Breast epithelium (tissue), 4 donors: ENCODE measurements at regions of chr12 and their contacts with region 1.

Region 1: DNA sequence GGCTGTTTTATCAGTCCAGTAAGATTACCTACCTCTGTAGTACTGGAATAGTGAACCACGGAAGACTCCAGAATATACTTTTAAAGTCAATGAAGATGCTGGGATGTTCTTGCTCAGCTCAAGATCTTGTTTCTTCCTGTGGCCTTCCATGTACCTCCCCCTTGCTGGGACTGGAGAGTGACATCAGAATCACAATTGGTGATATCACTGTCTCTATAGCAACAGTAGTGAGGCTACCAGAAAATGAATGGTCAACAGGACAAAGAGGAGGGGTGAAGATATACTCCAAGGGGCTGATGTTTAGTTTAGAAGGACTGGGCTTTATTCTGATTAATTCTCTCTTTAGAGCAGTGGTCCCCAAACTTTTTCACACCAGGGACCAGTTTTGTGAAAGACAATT is 3.8 kb downstream of the AKAP3 start:
- DNase-seq: no peak
- H3K4me3 ChIP-seq: no peak overlapping the region
- H3K27ac ChIP-seq: no peak overlapping the region
- H3K4me1 ChIP-seq: peaks cover 0 to 5% of the 10 kb centered on the region in 2 donors
- H3K27me3 ChIP-seq: no peaks in the 10 kb centered on the region
- CTCF ChIP-seq: no peak
- POLR2A ChIP-seq: no peak

Region 2: DNA sequence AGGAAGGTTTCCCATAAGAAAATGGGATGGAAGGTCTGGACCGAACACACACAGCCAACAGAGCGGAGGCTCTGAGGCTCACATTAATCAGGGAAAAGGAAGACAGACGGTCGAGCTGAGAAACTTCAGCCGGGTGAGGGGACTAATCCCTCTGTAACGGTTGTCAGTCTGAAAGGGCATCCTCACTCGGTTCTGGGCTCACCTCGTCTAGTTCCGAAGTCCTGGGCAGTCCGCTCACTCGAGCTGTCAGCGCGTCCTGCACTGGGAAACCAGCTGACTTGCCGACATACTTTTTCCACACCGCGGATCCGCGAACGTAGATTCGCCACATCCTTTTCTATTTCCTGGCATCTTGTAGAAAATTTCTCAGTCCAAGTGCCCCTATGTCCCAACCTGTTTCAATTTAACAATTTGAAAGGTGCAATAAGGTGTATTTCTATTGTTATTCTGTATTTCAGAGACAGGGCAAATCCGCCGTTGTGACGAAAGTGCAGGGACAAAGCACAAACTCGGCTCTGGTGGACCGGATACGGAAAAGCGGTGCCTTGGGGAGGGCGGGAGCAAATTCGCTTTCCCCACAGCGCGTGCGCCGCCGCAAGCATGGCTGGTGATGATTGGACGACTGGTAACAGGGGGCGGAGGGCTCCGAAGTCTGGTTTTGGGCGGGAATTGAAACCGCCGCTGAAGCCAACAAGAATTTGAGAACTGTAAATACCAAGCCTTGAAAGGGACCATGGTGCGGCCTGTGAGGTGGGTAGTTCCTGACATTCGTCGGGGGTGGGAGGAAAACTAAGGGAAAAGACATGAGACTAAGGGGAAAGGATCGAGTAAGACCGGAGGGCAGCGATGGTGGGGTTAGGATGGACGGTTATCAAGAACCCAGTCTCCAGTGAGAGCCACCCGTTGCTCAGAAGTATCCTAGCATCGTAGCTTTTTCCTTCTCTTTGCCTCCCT is 106.5 kb before region 1 on chr12 and contains the start of gene RAD51AP1:
- intact Hi-C with region 1: no loop called
- DNase-seq: peak; percentile 89 to 91
- H3K4me3 ChIP-seq: peak within 1 kb of the TSS; percentile 56 to 80 (median 75)
- H3K27ac ChIP-seq: peak within 1 kb of the TSS; percentile 88 to 97
- H3K4me1 ChIP-seq: peaks cover 0 to 4% of the 10 kb centered on the region in 2 donors
- H3K27me3 ChIP-seq: no peaks in the 10 kb centered on the region
- CTCF ChIP-seq: no peak
- POLR2A ChIP-seq: no peak
- total RNA-seq, gene RAD51AP1: 2.1 to 5.4 (median 2.9) TPM

Region 3: DNA sequence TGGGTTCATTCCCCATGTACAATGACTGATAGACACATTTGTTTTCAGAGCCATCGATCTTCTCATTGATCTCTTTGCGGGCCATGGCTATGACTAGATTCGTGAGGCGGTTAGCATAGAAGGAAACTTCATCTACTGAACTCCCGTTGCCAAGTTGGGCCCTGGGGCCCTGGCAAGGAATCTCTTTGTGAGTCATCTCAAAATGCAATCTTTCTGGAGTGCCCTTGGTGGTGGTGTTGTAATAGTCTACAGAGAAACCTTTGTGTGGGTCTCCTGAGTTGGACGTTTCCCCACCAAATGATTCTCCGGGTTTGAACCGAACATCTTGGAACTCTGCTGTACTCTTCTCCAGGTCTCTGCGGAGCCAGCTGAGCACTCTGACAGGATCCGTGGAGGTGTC is 16.6 kb before region 1 on chr12:
- intact Hi-C with region 1: loop called (anchors 1 kb)
- DNase-seq: peak in 1 of 2 donors; percentile 79
- H3K4me3 ChIP-seq: no peak overlapping the region
- H3K27ac ChIP-seq: peak overlapping the region in 1 of 2 donors; percentile 20
- H3K4me1 ChIP-seq: no peaks in the 10 kb centered on the region
- H3K27me3 ChIP-seq: no peaks in the 10 kb centered on the region
- CTCF ChIP-seq: no peak
- POLR2A ChIP-seq: no peak